Heart left ventricle (tissue), 16 donors: ENCODE measurements at regions of chr1 and their contacts with region 1.

Region 1: GRCh38 chr1:181105134-181106021 is 16.9 kb downstream of the IER5 start:
- DNase-seq: peak; percentile 96 to 99 (median 97)
- ATAC-seq: peak; percentile 86 to 97 (median 94)
- H3K4me3 ChIP-seq: peak overlapping the region; percentile 48 to 89 (median 71)
- H3K27ac ChIP-seq: peak overlapping the region; percentile 68 to 95 (median 90)
- H3K4me1 ChIP-seq: peaks cover 0 to 72% (median 29%) of the 10 kb centered on the region in 12 donors
- H3K27me3 ChIP-seq: no peaks in the 10 kb centered on the region
- CTCF ChIP-seq: no peak
- POLR2A ChIP-seq: peak in 1 of 2 donors; percentile 56

Region 2: DNA sequence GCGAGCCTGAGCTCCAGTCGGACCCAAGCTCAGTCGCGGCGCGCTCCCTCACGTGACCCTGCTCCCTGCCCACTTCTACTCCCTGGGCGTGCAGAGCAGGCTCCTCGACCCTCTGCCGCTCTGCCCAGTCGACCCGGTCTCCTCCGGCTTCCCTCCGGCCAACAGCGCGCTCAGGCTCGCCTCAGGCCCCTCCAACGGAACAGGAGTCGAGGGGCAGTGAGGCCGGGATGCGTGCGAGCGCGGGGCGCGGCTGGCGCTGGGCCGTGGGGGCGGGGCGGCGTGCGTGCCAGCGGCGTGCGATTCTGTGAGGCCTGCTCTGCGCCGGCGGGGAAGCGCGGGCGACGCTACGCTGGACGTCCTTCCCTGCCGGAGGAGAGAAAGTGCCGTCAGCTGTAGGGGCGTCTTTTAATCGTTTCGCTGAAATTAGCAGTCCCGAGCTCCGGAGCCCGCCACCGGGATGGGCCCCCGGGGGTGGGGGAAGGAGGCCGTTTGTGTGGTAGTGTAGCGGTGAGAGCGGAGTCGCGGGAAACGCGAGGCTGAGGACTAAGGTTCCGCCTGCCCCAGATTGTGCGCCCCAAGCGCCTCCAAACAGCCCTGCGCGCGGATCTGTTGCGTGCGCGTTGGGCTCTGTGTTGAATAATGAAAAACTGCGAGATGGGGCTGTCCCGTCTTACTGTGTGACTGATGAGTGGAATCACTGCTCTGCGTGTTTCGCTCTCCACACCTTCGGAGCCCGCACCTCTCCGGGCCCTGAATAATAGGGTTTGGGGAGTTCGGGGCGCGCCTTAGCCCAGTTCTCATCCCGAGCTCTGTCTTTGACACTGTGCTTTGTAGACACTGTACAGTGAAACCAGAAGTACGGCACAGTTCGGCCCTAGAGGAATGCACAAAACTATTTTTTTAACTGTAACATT is 602.8 kb before region 1 on chr1 and contains the start of gene ACBD6:
- intact Hi-C with region 1: loop called in 1 of 10 experiments (anchors 5 kb)
- DNase-seq: peak; percentile 82 to 91 (median 84)
- ATAC-seq: peak; percentile 87 to 96 (median 94)
- H3K4me3 ChIP-seq: peak within 1 kb of the TSS; percentile 75 to 95 (median 90)
- H3K27ac ChIP-seq: peak within 1 kb of the TSS; percentile 84 to 95 (median 92)
- H3K4me1 ChIP-seq: peaks cover 0 to 32% (median 15%) of the 10 kb centered on the region in 12 donors
- H3K27me3 ChIP-seq: no peaks in the 10 kb centered on the region
- CTCF ChIP-seq: peak in 4 of 12 donors; percentile 20 to 28 (median 24)
- POLR2A ChIP-seq: peak in 1 of 2 donors; percentile 53
- total RNA-seq, gene ACBD6: 18.6 to 24.6 (median 21.5) TPM

Region 3: DNA sequence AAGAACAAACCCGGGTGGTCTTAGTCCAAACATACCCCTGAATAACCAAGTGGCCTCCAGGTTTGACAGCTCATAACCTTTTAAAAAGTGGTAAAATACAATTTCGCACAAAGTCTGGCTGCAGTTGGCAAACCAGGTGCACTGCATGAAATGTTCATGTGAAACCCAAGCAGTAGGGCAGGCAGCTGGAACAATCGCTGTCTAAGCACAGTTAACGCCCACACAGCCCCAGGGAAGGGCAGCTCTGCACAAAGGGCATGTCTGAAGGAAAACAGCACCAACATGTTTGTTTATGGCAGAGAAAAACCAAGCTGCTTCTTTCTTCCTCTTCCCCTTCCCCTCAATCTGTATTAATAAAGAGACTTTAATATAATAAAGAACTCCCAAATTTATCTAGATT is 143.2 kb before region 1 on chr1:
- intact Hi-C with region 1: no loop called
- DNase-seq: no peak
- ATAC-seq: no peak
- H3K4me3 ChIP-seq: no peak overlapping the region
- H3K27ac ChIP-seq: no peak overlapping the region
- H3K4me1 ChIP-seq: peaks cover 0 to 3% (median 0%) of the 10 kb centered on the region in 12 donors
- H3K27me3 ChIP-seq: no peaks in the 10 kb centered on the region
- CTCF ChIP-seq: no peak
- POLR2A ChIP-seq: no peak

Region 4: DNA sequence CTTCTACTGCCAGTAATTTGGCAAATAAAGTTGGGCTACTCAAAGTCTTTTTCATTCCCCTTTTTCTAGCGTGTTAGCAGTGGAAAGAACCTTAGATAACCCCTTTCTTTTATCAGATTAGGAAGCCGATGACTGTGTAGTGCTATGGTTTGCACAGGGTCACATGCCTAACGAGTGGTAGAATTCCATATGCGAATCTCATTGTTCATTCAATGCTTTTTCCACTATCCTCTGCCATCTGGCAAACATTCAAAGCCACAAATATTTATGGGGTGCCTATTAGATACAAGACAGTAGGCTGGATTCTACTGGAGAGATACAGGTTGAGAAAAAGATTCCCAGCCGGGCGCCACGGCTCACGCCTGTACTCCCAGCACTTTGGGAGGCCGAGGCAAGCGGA is 31.7 kb before region 1 on chr1:
- intact Hi-C with region 1: no loop called
- DNase-seq: no peak
- ATAC-seq: no peak
- H3K4me3 ChIP-seq: no peak overlapping the region
- H3K27ac ChIP-seq: no peak overlapping the region
- H3K4me1 ChIP-seq: peaks cover 0 to 10% (median 0%) of the 10 kb centered on the region in 12 donors
- H3K27me3 ChIP-seq: peaks cover 0 to 5% (median 0%) of the 10 kb centered on the region in 9 donors
- CTCF ChIP-seq: no peak
- POLR2A ChIP-seq: no peak

Region 5: DNA sequence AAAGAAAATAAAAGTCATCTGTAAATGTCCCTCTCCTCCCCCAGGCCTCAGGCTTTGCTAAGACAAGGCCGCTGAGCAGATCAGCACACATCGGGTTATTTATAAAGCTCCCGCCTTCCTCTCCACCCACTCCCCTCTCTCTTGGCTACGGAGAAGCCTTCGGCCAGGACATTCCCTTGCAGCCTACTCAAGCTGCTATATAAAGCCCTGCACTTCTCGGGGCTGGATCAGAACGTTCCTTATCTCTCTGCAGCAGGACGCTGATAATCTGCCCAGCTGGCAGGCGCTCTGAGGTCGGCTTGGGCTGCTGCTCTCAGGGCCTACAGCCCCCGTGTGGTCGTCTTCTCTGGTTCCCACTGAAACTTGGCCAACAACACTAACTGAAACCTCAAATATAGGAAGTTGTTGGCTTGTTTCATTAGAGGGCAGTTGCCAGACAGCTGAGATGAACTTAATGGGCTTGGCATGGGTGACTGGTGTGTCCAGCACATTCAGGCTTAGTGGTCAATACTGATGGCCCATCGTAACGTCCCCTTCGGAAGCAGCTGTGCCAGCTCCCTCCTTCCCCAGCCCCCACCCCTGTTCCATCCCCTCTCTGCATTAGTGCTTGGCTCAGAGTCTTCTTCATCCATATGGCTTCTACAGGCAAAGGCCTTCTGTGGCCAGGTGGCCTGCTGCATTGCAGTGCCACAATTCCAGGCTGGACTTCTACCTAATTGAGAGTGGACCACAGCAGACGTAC is 47.7 kb after region 1 on chr1:
- intact Hi-C with region 1: no loop called
- DNase-seq: peak; percentile 89 to 96 (median 91)
- ATAC-seq: peak; percentile 94 to 97 (median 96)
- H3K4me3 ChIP-seq: peak overlapping the region in 2 of 12 donors; percentile 5 to 7
- H3K27ac ChIP-seq: peak overlapping the region; percentile 87 to 97 (median 94)
- H3K4me1 ChIP-seq: peaks cover 14 to 56% (median 27%) of the 10 kb centered on the region in 12 donors
- H3K27me3 ChIP-seq: no peaks in the 10 kb centered on the region
- CTCF ChIP-seq: peak in 11 of 12 donors; percentile 27 to 68 (median 45)
- POLR2A ChIP-seq: peak in 1 of 2 donors; percentile 46

Region 6: DNA sequence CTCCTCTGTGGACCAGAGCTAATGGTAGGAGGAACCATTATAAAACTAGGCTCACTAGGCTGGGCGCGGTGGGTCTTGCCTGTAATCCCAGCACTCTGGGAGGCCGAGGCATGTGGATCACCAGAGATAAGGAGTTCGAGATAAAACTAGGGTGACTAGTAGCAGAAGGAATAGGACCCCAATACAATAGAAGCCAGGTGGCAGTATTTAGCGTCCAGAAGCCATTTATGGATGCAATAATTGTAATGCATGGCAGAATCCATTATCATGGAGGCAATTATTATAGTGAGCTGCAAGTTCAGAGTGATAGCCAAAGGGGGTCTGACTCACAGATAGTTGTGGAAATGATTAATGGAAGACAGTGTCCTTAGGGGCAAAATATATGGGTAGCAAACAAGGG is 127.2 kb after region 1 on chr1:
- intact Hi-C with region 1: no loop called
- DNase-seq: no peak
- ATAC-seq: no peak
- H3K4me3 ChIP-seq: no peak overlapping the region
- H3K27ac ChIP-seq: no peak overlapping the region
- H3K4me1 ChIP-seq: no peaks in the 10 kb centered on the region
- H3K27me3 ChIP-seq: no peaks in the 10 kb centered on the region
- CTCF ChIP-seq: no peak
- POLR2A ChIP-seq: no peak